KBM-7 (cell line): ENCODE measurements at regions of chr2 and their contacts with region 1.

Region 1: DNA sequence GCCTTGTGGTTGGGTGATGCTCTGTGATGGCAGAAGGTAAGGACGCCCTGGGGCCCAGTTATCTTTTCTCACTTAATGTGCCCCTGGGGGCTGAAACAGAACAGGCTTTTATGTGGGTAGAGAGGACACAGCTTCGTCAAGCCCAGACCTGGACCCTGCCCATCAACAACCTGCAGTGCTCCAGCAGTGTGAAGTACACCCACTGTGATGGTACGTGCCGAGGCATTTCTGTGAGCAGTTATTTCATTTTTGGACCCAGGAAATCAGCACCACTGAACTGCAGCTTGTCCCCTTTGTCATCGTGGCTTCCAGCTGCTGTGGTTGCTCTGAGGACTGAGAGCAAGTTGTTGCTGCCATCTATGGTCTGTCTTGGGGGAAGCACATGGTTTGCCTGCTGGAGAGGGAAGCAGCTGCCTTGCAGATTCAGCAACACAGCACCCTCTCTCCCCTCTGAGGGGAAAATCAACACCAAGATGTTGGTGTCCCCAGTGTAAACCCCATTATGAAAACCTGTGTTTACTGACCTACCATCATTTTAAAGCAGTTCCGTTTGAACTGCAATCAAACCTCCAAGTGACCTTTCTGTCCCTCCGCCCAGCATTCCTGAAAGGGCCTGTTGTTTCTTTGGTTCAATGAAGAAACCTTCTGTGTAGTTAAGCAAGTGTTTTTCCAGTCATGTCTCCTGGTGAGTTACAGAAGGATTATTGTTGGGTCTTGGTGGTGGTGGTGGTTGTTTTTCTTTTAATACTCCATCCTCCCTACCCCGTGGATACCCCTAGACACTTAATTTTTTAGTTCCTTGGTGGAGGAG is 158.2 kb downstream of the MGAT5 start:
- DNase-seq: peak; percentile 81

Region 2: DNA sequence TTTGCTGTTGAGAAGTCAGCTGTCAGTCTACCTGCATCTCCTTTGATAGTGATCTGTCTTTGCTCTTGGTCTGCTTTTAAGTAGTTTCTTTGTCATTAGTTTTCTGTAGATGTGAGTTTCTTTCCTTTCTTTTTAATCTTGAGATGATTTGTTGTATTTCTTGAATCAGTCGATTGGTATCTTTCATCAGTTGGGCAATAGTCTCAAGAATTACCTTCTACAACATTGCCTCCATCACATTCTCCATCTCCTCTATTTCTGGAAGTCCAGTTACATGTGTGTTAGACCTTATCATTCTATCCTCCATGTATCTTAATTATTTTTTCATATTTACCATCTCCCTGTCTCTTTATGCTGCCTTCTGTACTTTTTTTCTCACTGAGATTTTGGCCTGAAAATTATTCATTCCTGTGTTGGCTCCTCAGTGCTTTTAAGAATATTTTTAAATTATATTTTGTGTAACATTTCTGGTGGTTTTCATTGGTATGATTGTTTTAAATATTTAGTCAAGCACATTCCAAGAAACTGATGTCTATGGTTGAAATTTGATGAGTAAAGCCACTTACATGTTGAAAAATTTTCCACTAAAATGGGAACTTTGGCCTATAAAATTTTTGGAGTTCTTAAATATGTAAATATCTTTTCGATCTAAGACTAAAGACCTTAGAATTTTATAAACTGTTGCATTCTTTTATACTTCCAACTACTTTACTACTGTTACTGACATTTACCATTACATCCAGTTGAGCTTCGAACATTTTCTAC is 397.7 kb before region 1 on chr2:
- in situ Hi-C with region 1: no loop called
- DNase-seq: no peak

Region 3: DNA sequence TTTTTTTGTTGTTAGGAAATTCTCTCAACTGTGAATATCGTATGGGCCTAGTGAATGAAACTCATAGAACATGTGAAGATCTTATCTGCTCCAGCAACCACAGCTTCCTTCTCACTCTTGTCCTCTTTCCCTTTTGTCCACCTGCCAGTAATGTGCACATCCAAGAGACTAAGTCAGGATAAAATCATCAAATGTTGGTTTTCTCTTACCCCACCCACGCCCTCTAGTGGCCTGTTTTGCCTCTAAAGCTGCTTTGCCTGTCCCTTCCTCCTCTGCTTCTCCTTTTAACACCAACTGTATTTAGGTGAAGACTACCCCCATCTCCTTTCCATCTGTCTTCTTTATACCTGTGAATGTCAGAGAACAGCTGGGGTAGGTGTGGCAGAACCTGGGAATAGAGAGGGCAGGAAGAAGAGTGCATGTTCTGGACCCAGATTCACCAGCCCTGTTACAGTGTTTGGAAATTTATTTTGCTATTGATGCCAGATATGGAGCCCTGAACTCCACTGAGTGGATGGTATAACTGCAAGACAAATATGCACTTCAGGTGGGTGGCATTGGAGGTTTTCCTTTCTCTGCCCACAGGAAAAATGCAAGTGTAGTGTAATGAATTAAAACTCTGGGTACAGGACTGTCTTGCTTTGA is 166.6 kb before region 1 on chr2:
- in situ Hi-C with region 1: loop called (anchors 25 kb)
- DNase-seq: peak; percentile 96

Region 4: GRCh38 chr2:134359367-134360081 is 52.5 kb before region 1 on chr2:
- in situ Hi-C with region 1: no loop called
- DNase-seq: no peak